Vagina (tissue), 2 donors: ENCODE measurements at regions of chr5 and their contacts with region 1.

Region 1: DNA sequence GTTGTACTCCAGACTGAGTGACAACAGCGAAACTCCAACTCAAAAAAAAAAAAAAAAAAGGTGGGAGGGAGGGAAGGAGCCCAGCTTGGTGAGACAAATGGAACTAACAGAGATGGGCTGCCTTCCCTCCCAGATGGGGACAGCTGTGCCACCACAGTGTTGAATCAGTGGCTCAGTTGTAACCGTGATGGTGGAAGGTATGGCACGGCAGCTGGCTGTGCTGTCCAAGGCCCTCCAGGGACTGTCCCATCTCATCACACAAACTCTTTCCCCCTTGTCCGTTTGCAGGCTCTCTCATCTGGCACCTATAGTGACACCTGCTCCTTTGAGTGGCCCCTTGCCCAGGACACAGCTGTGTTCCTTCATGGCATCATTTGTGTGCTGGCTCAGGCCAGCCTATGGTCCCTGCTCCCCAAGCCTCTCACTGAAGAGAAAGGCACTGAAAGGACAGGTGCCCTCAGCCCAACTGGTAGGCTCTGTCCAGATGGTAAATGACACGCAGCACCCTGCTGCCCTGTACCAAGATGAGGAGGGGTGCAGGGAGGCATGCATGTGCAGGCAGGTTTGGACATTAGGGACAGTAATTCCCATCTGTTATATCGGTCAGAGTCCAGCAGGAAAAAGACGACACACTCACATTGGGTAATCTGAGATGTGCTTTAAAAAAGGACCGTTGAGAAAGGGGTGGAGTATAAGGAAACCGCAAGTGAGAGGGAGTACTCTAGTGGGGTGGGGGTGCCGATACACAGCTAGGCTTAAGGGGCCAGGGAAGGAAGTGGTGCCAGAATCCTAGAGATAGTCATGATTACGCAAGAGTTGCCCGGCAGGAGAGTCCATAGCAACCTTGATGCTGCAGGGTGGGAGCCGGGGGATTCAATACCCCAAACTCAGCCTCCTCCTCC is 4.3 kb downstream of the SMIM33 start:
- DNase-seq: no peak
- H3K4me3 ChIP-seq: no peak overlapping the region
- H3K27ac ChIP-seq: peak overlapping the region; percentile 35
- H3K4me1 ChIP-seq: peaks cover 36% of the 10 kb centered on the region
- H3K27me3 ChIP-seq: no peaks in the 10 kb centered on the region
- CTCF ChIP-seq: no peak
- POLR2A ChIP-seq: no peak

Region 2: GRCh38 chr5:139354186-139354585 is 121.0 kb before region 1 on chr5:
- intact Hi-C with region 1: no loop called
- DNase-seq: no peak
- H3K4me3 ChIP-seq: no peak overlapping the region
- H3K27ac ChIP-seq: no peak overlapping the region
- H3K4me1 ChIP-seq: peaks cover 44% of the 10 kb centered on the region
- H3K27me3 ChIP-seq: no peaks in the 10 kb centered on the region
- CTCF ChIP-seq: no peak
- POLR2A ChIP-seq: no peak

Region 3: GRCh38 chr5:139439013-139439903 is 35.9 kb before region 1 on chr5 and contains the start of gene DNAJC18:
- intact Hi-C with region 1: loop called (anchors 5 kb)
- DNase-seq: no peak
- H3K4me3 ChIP-seq: peak within 1 kb of the TSS; percentile 81 to 92
- H3K27ac ChIP-seq: peak within 1 kb of the TSS; percentile 97
- H3K4me1 ChIP-seq: peaks cover 14% of the 10 kb centered on the region
- H3K27me3 ChIP-seq: no peaks in the 10 kb centered on the region
- CTCF ChIP-seq: no peak
- POLR2A ChIP-seq: no peak
- total RNA-seq, gene DNAJC18: 7.6 TPM